ENCODE measurements at regions of chr2 and their contacts with region 1.

Region 1: GRCh38 chr2:64052468-64053241 is 33.4 kb upstream of the VPS54 start:
- DNase-seq: no peak
- H3K4me3 Mint-ChIP-seq: no peak overlapping the region
- H3K27ac Mint-ChIP-seq: no peak overlapping the region
- H3K4me1 Mint-ChIP-seq: peaks cover 23% of the 10 kb centered on the region
- H3K27me3 Mint-ChIP-seq: no peaks in the 10 kb centered on the region
- CTCF ChIP-seq: no peak

Region 2: DNA sequence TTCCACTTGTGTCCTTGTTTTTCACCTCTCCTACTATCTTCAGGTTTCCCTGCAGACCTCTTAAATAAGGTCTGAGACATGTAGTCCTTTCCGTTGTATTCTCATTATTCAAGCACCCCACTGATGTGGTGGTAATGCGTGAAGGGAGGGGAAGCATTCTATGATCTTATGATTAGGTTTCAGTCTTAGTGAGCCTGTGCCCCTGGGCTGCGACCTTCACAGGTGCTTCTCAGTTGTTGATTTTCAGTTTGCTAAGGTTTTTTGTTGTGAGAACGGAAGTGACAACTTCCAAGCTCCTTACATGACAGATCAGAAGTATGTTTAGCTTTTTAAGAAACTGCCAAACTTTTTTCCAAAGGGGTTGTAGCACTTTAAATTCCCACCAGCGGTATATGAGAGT is 74.8 kb before region 1 on chr2:
- CTCF ChIA-PET with region 1: no interaction called
- POLR2A ChIA-PET with region 1: no interaction called
- intact Hi-C with region 1: no loop called
- DNase-seq: no peak
- H3K4me3 Mint-ChIP-seq: no peak overlapping the region
- H3K27ac Mint-ChIP-seq: no peak overlapping the region
- H3K4me1 Mint-ChIP-seq: no peaks in the 10 kb centered on the region
- H3K27me3 Mint-ChIP-seq: no peaks in the 10 kb centered on the region
- CTCF ChIP-seq: no peak

Region 3: DNA sequence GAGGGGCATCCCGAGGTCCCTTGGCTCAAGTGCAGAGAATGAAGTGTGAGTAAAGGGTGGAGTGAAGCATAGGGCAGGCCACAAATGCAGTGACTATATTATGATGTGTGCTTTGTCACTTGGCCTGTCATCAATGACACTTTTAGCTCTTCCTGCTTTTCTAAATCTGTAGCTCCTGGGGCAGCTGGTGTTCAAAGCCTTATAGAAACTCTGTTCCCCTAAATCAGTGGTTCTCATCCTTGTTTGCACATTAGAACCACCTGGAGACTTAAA is 265.8 kb after region 1 on chr2:
- CTCF ChIA-PET with region 1: interaction called, 11 read pairs
- POLR2A ChIA-PET with region 1: no interaction called
- intact Hi-C with region 1: no loop called
- DNase-seq: no peak
- H3K4me3 Mint-ChIP-seq: no peak overlapping the region
- H3K27ac Mint-ChIP-seq: no peak overlapping the region
- H3K4me1 Mint-ChIP-seq: no peaks in the 10 kb centered on the region
- H3K27me3 Mint-ChIP-seq: peaks cover 19% of the 10 kb centered on the region
- CTCF ChIP-seq: no peak

Region 4: DNA sequence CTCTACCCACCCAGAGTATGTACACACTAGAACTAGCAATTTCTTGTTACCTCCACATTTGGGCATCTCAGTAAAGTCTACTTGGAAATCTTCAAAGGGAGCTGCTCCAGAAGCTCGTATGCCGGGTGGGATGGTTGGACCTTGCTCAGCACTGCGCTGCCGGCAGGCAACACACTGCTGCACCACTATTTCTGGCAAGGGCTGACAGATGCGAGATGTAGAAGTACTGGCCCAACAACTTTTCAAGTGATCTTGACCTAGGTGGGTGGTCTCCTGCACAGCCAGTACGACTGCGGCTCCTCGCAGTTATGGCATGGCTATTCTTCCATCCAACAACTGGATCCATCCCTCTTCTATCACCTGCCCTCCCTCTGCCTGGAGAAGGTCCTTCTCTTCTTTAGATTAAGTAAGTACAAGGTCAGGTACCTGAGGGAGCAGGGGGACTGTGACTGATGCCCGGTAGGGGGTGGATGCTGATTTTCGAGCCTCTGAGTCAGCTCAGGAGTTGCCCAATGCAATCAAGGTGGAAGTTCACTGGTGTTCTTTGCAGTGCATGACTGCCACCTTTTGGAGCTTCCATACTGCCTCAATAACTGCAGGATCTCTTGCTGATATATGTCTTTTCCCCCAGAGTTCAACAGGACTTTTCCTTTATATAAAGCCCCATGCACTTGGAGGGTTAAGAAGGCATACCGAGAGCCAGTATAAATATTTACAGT is 836.1 kb after region 1 on chr2:
- CTCF ChIA-PET with region 1: interaction called, 3 read pairs
- POLR2A ChIA-PET with region 1: no interaction called
- intact Hi-C with region 1: loop called (anchors 1 kb)
- DNase-seq: peak; percentile 88
- H3K4me3 Mint-ChIP-seq: no peak overlapping the region
- H3K27ac Mint-ChIP-seq: no peak overlapping the region
- H3K4me1 Mint-ChIP-seq: no peaks in the 10 kb centered on the region
- H3K27me3 Mint-ChIP-seq: peaks cover 25% of the 10 kb centered on the region
- CTCF ChIP-seq: peak; percentile 55